Adrenal gland (tissue), 19 donors: ENCODE measurements at regions of chr6 and their contacts with region 1.

Region 1: GRCh38 chr6:32894080-32895005 is 40.4 kb downstream of the PSMB9 start:
- DNase-seq: peak; percentile 93 to 97 (median 93)
- H3K4me3 ChIP-seq: peak overlapping the region; percentile 33 to 87 (median 72)
- H3K27ac ChIP-seq: peak overlapping the region; percentile 86 to 96 (median 91)
- H3K4me1 ChIP-seq: peaks cover 22 to 24% of the 10 kb centered on the region in 2 donors
- H3K27me3 ChIP-seq: no peaks in the 10 kb centered on the region
- CTCF ChIP-seq: no peak
- POLR2A ChIP-seq: peak; percentile 40 to 85

Region 2: GRCh38 chr6:32971581-32972352 is 77.4 kb after region 1 on chr6:
- intact Hi-C with region 1: loop called in 1 of 2 experiments (anchors 5 kb)
- DNase-seq: peak; percentile 99 to 100 (median 100)
- H3K4me3 ChIP-seq: peak overlapping the region; percentile 78 to 90 (median 88)
- H3K27ac ChIP-seq: peak overlapping the region; percentile 99 to 100 (median 100)
- H3K4me1 ChIP-seq: peaks cover 29 to 31% of the 10 kb centered on the region in 2 donors
- H3K27me3 ChIP-seq: no peaks in the 10 kb centered on the region
- CTCF ChIP-seq: peak in 2 of 6 experiments; percentile 12 to 38
- POLR2A ChIP-seq: peak; percentile 99

Region 3: DNA sequence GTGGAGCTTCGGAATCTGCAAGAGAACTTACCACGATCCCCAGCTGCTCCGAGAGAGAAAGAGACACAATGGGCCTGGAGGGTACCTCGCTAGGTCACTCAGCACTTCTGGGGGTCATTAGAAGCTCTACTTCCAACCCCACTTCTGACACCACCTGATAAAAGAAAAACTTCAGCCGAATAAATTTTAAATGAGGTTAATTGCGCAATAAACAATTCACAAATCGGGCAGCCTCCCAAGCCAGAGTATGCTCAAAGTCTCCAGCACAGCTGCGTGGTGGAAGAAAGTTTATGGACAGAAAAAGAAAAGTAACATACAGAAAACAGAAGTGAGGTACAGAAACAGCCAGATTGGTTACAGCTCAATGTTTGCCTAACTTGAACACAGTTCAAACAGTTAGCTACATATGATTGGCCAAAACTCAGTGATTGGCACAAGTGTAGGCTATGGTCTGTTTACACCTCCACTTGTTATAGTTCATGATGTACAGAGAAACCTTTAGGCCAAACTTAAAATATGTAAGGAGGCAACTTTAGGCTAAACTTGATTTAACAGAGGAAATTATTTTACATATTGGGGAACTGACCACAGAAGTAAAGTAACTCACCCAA is 245.4 kb after region 1 on chr6:
- intact Hi-C with region 1: loop called in 1 of 2 experiments (anchors 5 kb)
- DNase-seq: no peak
- H3K4me3 ChIP-seq: no peak overlapping the region
- H3K27ac ChIP-seq: no peak overlapping the region
- H3K4me1 ChIP-seq: no peaks in the 10 kb centered on the region
- H3K27me3 ChIP-seq: no peaks in the 10 kb centered on the region
- CTCF ChIP-seq: no peak
- POLR2A ChIP-seq: no peak